ENCODE measurements at regions of chr1 and their contacts with region 1.

Region 1: DNA sequence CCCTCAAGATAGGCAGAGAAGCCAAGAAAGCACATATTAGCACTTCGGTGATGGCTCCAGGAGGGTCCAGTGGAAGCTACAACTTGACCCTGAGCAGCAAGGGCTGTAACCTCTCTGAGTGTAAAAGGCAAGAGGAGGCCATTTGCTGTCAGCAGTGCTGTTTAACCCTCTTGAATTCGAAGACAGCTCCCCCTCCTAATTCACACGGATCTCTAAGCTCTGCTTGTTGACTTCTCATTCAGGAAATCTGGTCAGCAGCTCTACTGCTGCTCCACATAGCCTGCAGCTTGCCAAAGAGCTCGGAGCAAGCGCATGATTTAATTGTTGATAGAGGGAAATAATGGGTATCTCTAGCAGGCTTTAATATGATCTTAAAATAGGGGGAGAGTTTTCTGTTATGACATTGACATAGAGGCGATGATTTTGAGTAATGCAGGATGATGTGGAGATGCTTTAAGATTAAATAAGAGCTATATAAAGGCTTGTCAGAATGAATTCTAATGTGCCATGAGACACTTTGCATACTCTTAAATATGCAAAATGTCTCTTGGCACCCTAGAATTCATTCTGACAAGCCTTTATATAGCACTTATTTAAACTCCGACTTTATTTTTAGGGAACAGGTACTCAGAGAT is 79.4 kb upstream of the USH2A start:
- DNase-seq: no peak
- H3K4me3 ChIP-seq: no peak overlapping the region
- H3K4me3 Mint-ChIP-seq: no peak overlapping the region
- H3K27ac Mint-ChIP-seq: no peak overlapping the region
- H3K4me1 ChIP-seq: peaks cover 22% of the 10 kb centered on the region
- H3K4me1 Mint-ChIP-seq: peaks cover 10% of the 10 kb centered on the region
- H3K27me3 ChIP-seq: no peaks in the 10 kb centered on the region
- H3K27me3 Mint-ChIP-seq: no peaks in the 10 kb centered on the region
- CTCF ChIP-seq: no peak

Region 2: GRCh38 chr1:216250861-216251260 is 251.8 kb before region 1 on chr1:
- CTCF ChIA-PET with region 1: no interaction called
- POLR2A ChIA-PET with region 1: no interaction called
- intact Hi-C with region 1: no loop called
- DNase-seq: no peak
- H3K4me3 ChIP-seq: no peak overlapping the region
- H3K4me3 Mint-ChIP-seq: no peak overlapping the region
- H3K27ac Mint-ChIP-seq: no peak overlapping the region
- H3K4me1 ChIP-seq: no peaks in the 10 kb centered on the region
- H3K4me1 Mint-ChIP-seq: no peaks in the 10 kb centered on the region
- H3K27me3 ChIP-seq: no peaks in the 10 kb centered on the region
- H3K27me3 Mint-ChIP-seq: no peaks in the 10 kb centered on the region
- CTCF ChIP-seq: no peak

Region 3: GRCh38 chr1:216388558-216388957 is 114.1 kb before region 1 on chr1:
- CTCF ChIA-PET with region 1: no interaction called
- POLR2A ChIA-PET with region 1: interaction called, 12 read pairs
- intact Hi-C with region 1: no loop called
- DNase-seq: no peak
- H3K4me3 ChIP-seq: no peak overlapping the region
- H3K4me3 Mint-ChIP-seq: no peak overlapping the region
- H3K27ac Mint-ChIP-seq: no peak overlapping the region
- H3K4me1 ChIP-seq: no peaks in the 10 kb centered on the region
- H3K4me1 Mint-ChIP-seq: no peaks in the 10 kb centered on the region
- H3K27me3 ChIP-seq: no peaks in the 10 kb centered on the region
- H3K27me3 Mint-ChIP-seq: no peaks in the 10 kb centered on the region
- CTCF ChIP-seq: no peak

Region 4: DNA sequence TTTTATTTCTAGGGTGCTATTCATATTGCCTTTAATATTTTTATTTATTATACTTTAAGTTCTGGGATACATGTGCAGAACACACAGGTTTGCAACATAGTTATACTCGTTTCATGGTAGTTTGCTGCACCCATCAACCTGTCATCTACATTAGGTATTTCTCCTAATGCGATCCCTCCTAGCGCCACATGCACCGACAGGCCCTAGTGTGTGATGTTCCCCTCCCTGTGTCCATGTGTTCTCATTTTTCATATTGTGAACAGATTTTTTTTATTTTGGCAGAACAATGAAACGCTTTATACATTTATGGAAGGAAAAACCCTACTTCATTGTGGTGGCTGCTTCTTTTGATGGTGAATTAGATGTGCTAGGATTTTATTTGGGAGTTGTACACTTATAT is 65.0 kb before region 1 on chr1:
- CTCF ChIA-PET with region 1: no interaction called
- POLR2A ChIA-PET with region 1: no interaction called
- intact Hi-C with region 1: no loop called
- DNase-seq: no peak
- H3K4me3 ChIP-seq: no peak overlapping the region
- H3K4me3 Mint-ChIP-seq: no peak overlapping the region
- H3K27ac Mint-ChIP-seq: no peak overlapping the region
- H3K4me1 ChIP-seq: no peaks in the 10 kb centered on the region; the same call in 1 of the 2 replicates
- H3K4me1 Mint-ChIP-seq: no peaks in the 10 kb centered on the region
- H3K27me3 ChIP-seq: no peaks in the 10 kb centered on the region
- H3K27me3 Mint-ChIP-seq: no peaks in the 10 kb centered on the region
- CTCF ChIP-seq: no peak

Region 5: GRCh38 chr1:216466162-216466801 is 36.4 kb before region 1 on chr1:
- CTCF ChIA-PET with region 1: no interaction called
- POLR2A ChIA-PET with region 1: no interaction called
- intact Hi-C with region 1: no loop called
- DNase-seq: no peak
- H3K4me3 ChIP-seq: no peak overlapping the region
- H3K4me3 Mint-ChIP-seq: peak overlapping the region; percentile 23
- H3K27ac Mint-ChIP-seq: no peak overlapping the region
- H3K4me1 ChIP-seq: peaks cover 53% of the 10 kb centered on the region
- H3K4me1 Mint-ChIP-seq: peaks cover 31% of the 10 kb centered on the region
- H3K27me3 ChIP-seq: no peaks in the 10 kb centered on the region
- H3K27me3 Mint-ChIP-seq: no peaks in the 10 kb centered on the region
- CTCF ChIP-seq: no peak

Region 6: GRCh38 chr1:216528816-216529215 is 26.2 kb after region 1 on chr1:
- CTCF ChIA-PET with region 1: no interaction called
- POLR2A ChIA-PET with region 1: no interaction called
- intact Hi-C with region 1: loop called (anchors 1 kb)
- DNase-seq: peak; percentile 66 to 68
- H3K4me3 ChIP-seq: no peak overlapping the region
- H3K4me3 Mint-ChIP-seq: peak overlapping the region; percentile 44
- H3K27ac Mint-ChIP-seq: no peak overlapping the region
- H3K4me1 ChIP-seq: peaks cover 24% of the 10 kb centered on the region
- H3K4me1 Mint-ChIP-seq: peaks cover 18% of the 10 kb centered on the region
- H3K27me3 ChIP-seq: no peaks in the 10 kb centered on the region
- H3K27me3 Mint-ChIP-seq: no peaks in the 10 kb centered on the region
- CTCF ChIP-seq: no peak

Region 7: DNA sequence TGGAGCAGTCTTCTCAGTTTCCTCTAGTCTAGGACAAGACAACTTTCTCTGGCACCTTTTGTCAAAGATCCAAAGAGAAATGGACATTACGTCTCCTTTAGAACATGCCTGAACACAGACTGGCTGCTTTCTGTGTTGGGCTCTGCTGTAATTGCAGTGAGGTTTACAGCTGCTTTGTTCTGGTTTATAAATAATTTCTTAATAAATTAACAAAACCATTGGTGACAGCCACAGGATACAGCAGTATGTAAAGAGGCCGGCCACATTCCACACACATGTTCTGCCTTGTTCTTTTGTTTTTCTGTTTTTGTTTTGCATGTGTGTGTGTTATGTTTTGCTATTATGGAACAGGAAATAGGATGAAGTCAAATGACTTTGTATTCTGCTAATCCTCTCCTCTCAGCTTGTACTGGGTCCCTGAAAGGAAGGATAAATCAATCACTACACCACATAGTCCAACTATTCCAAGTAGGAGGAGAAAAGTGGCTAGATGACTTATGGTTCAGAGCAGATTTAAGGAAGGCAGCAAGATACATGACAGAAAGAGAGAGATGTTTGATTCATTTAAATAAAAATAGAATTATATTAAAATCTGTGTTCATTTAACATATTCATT is 382.1 kb after region 1 on chr1:
- CTCF ChIA-PET with region 1: no interaction called
- POLR2A ChIA-PET with region 1: no interaction called
- intact Hi-C with region 1: no loop called
- DNase-seq: no peak
- H3K4me3 ChIP-seq: no peak overlapping the region
- H3K4me3 Mint-ChIP-seq: no peak overlapping the region
- H3K27ac Mint-ChIP-seq: no peak overlapping the region
- H3K4me1 ChIP-seq: no peaks in the 10 kb centered on the region
- H3K4me1 Mint-ChIP-seq: no peaks in the 10 kb centered on the region
- H3K27me3 ChIP-seq: no peaks in the 10 kb centered on the region
- H3K27me3 Mint-ChIP-seq: no peaks in the 10 kb centered on the region
- CTCF ChIP-seq: no peak